Activated naive CD4-positive, alpha-beta T cell treated with anti-CD3 and anti-CD28 coated beads for 36 hours (primary cell): ENCODE measurements at regions of chr10 and their contacts with region 1.

Region 1: DNA sequence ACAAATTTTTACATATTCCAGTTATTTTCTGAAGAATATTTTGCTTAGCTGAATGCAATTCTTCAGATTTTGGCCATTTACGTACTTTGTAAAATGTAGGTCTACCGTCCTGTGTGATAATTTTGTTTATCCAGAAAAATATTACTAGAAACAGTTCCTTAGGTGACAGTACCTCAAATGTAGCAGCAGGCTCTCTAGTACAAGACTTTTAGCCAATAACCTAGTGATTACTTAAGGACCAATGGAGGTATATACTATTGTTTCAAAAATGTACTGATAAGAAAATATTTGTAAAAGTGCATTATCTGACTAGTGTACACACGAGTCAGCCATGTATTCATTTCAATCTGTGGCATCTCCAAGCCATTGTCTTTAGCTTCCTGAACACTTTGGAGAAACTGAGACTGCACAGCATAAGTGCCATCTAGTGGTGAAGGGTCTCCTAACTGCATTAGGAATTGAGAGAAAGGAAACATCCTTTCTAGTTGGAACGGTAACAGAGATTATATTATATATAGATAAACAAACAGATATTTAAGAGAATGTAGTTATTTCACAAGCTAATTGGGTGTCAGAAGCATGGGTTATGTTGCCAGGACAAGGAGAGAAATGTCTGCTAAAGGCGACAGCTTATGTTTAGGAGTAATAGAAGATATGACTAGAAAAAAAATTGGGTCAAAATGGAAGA is 23.7 kb downstream of the RTKN2 start:
- DNase-seq: peak; percentile 74
- H3K4me3 Mint-ChIP-seq: no peak overlapping the region
- H3K27ac Mint-ChIP-seq: peak overlapping the region; percentile 76
- H3K4me1 Mint-ChIP-seq: peaks cover 38% of the 10 kb centered on the region
- H3K27me3 Mint-ChIP-seq: no peaks in the 10 kb centered on the region

Region 2: DNA sequence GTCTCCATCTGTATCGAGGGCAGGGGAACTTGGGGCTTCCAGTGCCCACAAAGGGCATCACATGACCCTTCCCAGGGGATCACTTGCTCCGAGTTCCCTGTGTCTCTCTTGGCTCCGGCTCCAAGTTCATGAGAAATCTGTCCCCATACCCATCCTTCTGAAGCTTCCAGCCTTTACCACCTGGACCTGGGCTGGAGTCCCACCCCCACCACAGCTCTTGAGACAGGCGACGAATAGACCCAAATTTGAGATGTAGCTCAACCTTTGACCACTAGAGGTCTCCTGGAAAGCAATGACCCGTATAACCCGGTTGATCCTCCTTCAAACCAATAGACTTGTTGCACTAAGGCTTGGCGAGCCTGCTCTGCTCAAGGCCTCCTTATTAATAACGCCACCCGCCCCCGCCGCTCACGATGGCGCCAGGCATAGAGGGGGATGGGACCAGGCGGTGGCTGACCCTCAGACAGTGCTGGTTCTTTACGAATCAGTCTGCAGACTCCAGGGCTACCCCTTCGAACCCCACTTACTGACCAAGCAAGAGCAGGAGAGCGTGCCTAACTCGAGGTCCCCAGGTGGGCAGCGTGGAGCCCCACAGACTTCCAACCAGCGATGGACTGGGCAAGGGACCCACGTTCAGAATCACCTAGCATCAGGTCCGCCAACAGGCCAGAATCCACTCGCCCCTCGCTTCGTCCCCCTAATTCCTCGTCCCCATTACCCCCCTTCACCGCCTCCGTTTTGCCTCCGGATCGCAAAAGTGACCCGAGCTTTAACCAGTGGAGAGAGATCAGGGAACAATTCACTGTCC is 347.9 kb before region 1 on chr10:
- CTCF ChIA-PET with region 1: interaction called, 9 read pairs
- intact Hi-C with region 1: loop called (anchors 1 kb)
- DNase-seq: peak; percentile 78
- H3K4me3 Mint-ChIP-seq: peak overlapping the region; percentile 77
- H3K27ac Mint-ChIP-seq: peak overlapping the region; percentile 90
- H3K4me1 Mint-ChIP-seq: peaks cover 40% of the 10 kb centered on the region
- H3K27me3 Mint-ChIP-seq: no peaks in the 10 kb centered on the region

Region 3: GRCh38 chr10:62038609-62039190 is 206.2 kb before region 1 on chr10:
- CTCF ChIA-PET with region 1: interaction called, 44 read pairs
- intact Hi-C with region 1: loop called (anchors 1 kb)
- DNase-seq: peak; percentile 90
- H3K4me3 Mint-ChIP-seq: peak overlapping the region; percentile 14
- H3K27ac Mint-ChIP-seq: peak overlapping the region; percentile 91
- H3K4me1 Mint-ChIP-seq: peaks cover 85% of the 10 kb centered on the region
- H3K27me3 Mint-ChIP-seq: no peaks in the 10 kb centered on the region

Region 4: DNA sequence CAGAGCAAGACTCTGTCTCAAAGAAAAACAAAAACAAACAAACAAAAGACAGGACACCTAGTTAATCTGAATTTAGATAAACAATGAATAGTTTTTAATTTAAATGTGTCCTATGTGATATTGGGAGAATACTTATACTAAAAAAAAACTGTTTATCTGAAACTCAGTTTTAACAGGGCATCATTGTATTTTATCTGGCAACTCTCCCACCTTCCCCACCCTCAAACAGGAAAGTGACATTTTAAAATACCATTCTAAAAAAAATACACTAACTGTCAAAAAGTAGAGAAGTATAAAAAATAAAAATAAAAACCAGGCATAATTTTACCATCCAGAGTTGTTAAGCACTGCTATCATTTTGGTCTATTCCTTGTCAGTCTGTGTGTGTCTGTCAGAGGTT is 95.3 kb before region 1 on chr10:
- CTCF ChIA-PET with region 1: interaction called, 19 read pairs
- intact Hi-C with region 1: loop called (anchors 1 kb)
- DNase-seq: no peak
- H3K4me3 Mint-ChIP-seq: no peak overlapping the region
- H3K27ac Mint-ChIP-seq: no peak overlapping the region
- H3K4me1 Mint-ChIP-seq: peaks cover 14% of the 10 kb centered on the region
- H3K27me3 Mint-ChIP-seq: no peaks in the 10 kb centered on the region

Region 5: GRCh38 chr10:62224606-62225005 is 20.3 kb before region 1 on chr10:
- CTCF ChIA-PET with region 1: no interaction called
- intact Hi-C with region 1: loop called (anchors 1 kb)
- DNase-seq: no peak
- H3K4me3 Mint-ChIP-seq: no peak overlapping the region
- H3K27ac Mint-ChIP-seq: peak overlapping the region; percentile 86
- H3K4me1 Mint-ChIP-seq: peaks cover 10% of the 10 kb centered on the region
- H3K27me3 Mint-ChIP-seq: no peaks in the 10 kb centered on the region